ENCODE measurements at regions of chr4 and their contacts with region 1.

Region 1: GRCh38 chr4:41882625-41883347 is 52.4 kb upstream of the TMEM33 start:
- DNase-seq: peak in 3 of 5 donors; percentile 28 to 59 (median 43)
- H3K4me3 ChIP-seq: peak overlapping the region; percentile 26
- H3K27ac ChIP-seq: no peak overlapping the region
- H3K4me1 ChIP-seq: peaks cover 7% of the 10 kb centered on the region
- H3K27me3 ChIP-seq: no peaks in the 10 kb centered on the region
- CTCF ChIP-seq: peak; percentile 10 to 46 (median 34)
- EP300 ChIP-seq: no peak
- POLR2A ChIP-seq: no peak

Region 2: GRCh38 chr4:41281038-41281634 is 601.6 kb before region 1 on chr4:
- intact Hi-C with region 1: loop called in 3 of 4 experiments (anchors 10 kb)
- DNase-seq: peak in 2 of 5 donors; percentile 13 to 39
- H3K4me3 ChIP-seq: no peak overlapping the region
- H3K27ac ChIP-seq: no peak overlapping the region
- H3K4me1 ChIP-seq: no peaks in the 10 kb centered on the region
- H3K27me3 ChIP-seq: no peaks in the 10 kb centered on the region
- CTCF ChIP-seq: peak; percentile 57 to 93 (median 88)
- EP300 ChIP-seq: no peak
- POLR2A ChIP-seq: no peak

Region 3: DNA sequence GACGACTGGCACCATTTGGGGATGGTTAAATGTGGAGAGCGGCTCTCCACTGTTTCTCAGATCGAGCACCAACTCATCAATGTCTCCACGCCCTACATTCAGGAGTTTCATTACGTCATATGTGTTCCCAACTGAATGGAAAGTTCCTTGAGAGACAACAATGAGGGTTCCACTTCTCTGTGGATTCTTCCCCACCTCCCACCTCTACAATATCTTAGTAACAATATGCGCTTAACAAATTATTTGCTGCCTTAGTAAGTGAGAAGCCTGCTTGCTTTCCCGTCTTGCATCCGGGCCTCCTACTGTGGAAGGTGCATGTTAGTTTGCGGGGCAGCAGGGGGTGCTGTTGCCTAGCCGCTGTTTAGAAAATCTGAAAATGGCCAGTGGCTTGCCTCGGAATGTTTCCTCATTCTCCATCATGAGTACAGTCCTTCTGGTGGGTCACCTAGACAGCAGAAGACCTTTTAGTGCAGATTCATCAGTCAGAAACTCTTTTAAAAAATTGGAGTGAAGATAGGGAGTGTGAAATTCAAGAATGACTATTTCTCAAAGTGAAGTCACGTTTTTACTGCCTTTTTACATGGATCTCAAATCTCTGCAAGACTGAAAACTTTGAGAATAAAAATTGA is 190.0 kb before region 1 on chr4:
- intact Hi-C with region 1: loop called in 2 of 4 experiments (anchors 5 to 10 kb)
- DNase-seq: peak in 4 of 5 donors; percentile 10 to 66 (median 32)
- H3K4me3 ChIP-seq: no peak overlapping the region
- H3K27ac ChIP-seq: no peak overlapping the region
- H3K4me1 ChIP-seq: no peaks in the 10 kb centered on the region
- H3K27me3 ChIP-seq: no peaks in the 10 kb centered on the region
- CTCF ChIP-seq: peak in 2 of 3 donors; percentile 25 to 33
- EP300 ChIP-seq: no peak
- POLR2A ChIP-seq: no peak

Region 4: GRCh38 chr4:41701961-41702360 is 180.8 kb before region 1 on chr4:
- intact Hi-C with region 1: loop called in 2 of 4 experiments (anchors 5 to 10 kb)
- DNase-seq: no peak
- H3K4me3 ChIP-seq: no peak overlapping the region
- H3K27ac ChIP-seq: no peak overlapping the region
- H3K4me1 ChIP-seq: no peaks in the 10 kb centered on the region
- H3K27me3 ChIP-seq: no peaks in the 10 kb centered on the region
- CTCF ChIP-seq: no peak
- EP300 ChIP-seq: no peak
- POLR2A ChIP-seq: no peak

Region 5: GRCh38 chr4:41897697-41898096 is 14.9 kb after region 1 on chr4:
- intact Hi-C with region 1: no loop called
- DNase-seq: no peak
- H3K4me3 ChIP-seq: no peak overlapping the region
- H3K27ac ChIP-seq: no peak overlapping the region
- H3K4me1 ChIP-seq: peaks cover 4% of the 10 kb centered on the region
- H3K27me3 ChIP-seq: no peaks in the 10 kb centered on the region
- CTCF ChIP-seq: no peak
- EP300 ChIP-seq: no peak
- POLR2A ChIP-seq: no peak

Region 6: DNA sequence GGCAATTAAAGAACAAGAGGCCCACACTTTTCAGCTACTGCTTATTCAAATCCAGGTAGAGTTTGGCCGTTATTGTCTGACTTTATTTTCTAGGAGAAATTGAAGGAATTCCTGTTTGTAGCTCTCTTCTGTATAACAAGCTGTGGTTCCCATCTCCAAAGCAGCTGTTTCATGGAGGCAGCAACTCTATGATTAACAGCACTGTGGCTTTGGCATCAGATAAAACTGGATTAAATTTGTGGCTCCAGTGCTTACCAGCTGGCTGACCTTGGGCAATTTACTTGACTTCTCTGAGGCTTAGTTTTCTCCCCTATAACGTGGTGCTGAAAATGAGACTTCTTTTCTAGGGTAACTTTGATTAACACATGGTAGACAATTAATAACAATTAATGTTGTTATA is 135.7 kb after region 1 on chr4:
- intact Hi-C with region 1: no loop called
- DNase-seq: no peak
- H3K4me3 ChIP-seq: no peak overlapping the region
- H3K27ac ChIP-seq: no peak overlapping the region
- H3K4me1 ChIP-seq: no peaks in the 10 kb centered on the region
- H3K27me3 ChIP-seq: no peaks in the 10 kb centered on the region
- CTCF ChIP-seq: no peak
- EP300 ChIP-seq: no peak
- POLR2A ChIP-seq: no peak